CD8-positive, alpha-beta T cell (primary cell): ENCODE measurements at regions of chrX and their contacts with region 1.

Region 1: GRCh38 chrX:153971450-153972367 is at the start of gene HCFC1:
- DNase-seq: peak; percentile 78 to 96 (median 92)
- ATAC-seq: peak; percentile 45
- H3K4me3 ChIP-seq: peak within 1 kb of the TSS; percentile 94 to 97
- H3K4me3 Mint-ChIP-seq: peak within 1 kb of the TSS; percentile 100
- H3K27ac ChIP-seq: peak within 1 kb of the TSS; percentile 94 to 99
- H3K27ac Mint-ChIP-seq: peak within 1 kb of the TSS; percentile 100
- H3K4me1 ChIP-seq: peaks cover 36% of the 10 kb centered on the region
- H3K4me1 Mint-ChIP-seq: peaks cover 40% of the 10 kb centered on the region
- H3K27me3 ChIP-seq: no peaks in the 10 kb centered on the region
- H3K27me3 Mint-ChIP-seq: no peaks in the 10 kb centered on the region
- CTCF ChIP-seq: no peak
- total RNA-seq, gene HCFC1: 49.1 to 56.3 TPM

Region 2: DNA sequence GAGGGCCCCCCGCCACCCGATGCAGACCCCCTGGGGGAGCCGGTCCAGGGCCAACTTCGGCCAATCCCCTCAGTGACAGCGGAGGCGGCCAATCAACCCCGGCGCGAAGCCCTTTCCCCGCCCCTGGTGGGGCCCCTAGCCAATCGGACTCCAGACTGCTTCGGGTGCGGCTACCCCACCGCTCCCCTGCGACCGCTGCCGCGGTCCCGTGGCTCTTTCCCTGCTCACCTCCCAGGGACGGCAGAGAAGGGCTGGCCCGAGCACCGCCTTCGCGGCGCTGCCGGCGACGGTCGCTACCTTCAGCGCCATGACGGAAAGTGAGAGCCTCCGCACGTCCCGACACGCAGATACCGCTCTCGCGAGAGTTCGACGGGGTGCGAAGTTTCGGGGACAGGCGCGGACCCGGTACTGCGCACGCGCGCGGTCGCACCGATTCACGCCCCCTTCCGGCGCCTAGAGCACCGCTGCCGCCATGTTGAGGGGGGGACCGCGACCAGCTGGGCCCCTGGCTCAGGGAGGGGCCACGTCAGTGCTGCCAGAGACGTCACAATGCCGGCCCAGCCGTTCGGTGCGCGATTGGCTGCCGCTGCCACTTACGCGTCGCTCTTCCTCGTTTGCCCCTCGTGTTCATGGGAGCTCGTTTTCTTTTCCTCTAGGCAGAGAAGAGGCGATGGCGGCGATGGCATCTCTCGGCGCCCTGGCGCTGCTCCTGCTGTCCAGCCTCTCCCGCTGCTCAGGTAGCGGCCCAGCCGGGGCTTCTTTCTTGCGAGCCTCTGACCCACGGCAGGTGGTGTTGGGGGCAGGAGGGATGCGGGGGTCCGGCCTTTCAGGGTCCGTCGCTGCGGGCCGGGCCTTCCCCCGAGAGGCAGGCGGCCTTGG is 177.5 kb before region 1 on chrX and contains the starts of genes IDH3G and SSR4:
- CTCF ChIA-PET with region 1: no interaction called
- POLR2A ChIA-PET with region 1: interaction called, 4 read pairs
- intact Hi-C with region 1: loop called in 1 of 2 experiments (anchors 1 kb)
- DNase-seq: peak; percentile 84 to 96 (median 90)
- ATAC-seq: peak; percentile 92
- H3K4me3 ChIP-seq: peak within 1 kb of the TSS; percentile 83 to 86
- H3K4me3 Mint-ChIP-seq: peak within 1 kb of the TSS; percentile 90
- H3K27ac ChIP-seq: peak within 1 kb of the TSS; percentile 92 to 95
- H3K27ac Mint-ChIP-seq: peak within 1 kb of the TSS; percentile 95
- H3K4me1 ChIP-seq: peaks cover 34% of the 10 kb centered on the region
- H3K4me1 Mint-ChIP-seq: peaks cover 30% of the 10 kb centered on the region
- H3K27me3 ChIP-seq: no peaks in the 10 kb centered on the region
- H3K27me3 Mint-ChIP-seq: no peaks in the 10 kb centered on the region
- CTCF ChIP-seq: no peak
- total RNA-seq, gene IDH3G: 55.8 to 56.5 TPM
- total RNA-seq, gene SSR4: 175 TPM

Region 3: DNA sequence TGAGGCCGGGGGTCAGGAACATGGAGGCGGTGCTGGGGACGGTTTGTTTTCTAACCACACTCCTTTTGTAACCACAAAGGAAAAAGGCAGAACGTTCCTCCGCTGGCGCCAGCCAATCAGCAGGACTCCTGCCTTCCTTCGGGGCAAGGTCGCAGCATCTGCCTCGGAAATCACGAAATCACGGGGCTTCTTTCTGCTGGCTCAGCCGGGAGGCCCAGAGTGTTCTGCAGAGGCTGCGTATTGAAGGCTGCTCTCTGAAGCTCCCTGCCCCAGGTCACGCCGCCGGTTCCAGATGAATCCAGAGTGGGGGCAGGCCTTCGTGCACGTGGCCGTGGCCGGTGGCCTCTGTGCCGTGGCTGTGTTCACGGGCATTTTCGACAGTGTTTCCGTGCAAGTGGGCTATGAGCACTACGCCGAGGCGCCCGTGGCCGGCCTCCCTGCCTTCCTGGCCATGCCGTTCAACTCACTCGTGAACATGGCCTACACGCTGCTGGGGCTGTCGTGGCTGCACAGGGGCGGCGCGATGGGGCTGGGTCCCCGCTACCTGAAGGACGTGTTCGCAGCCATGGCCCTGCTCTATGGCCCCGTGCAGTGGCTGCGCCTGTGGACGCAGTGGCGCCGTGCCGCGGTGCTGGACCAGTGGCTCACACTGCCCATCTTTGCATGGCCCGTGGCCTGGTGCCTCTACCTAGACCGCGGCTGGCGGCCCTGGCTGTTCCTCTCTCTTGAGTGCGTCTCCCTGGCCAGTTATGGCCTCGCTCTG is 10.2 kb after region 1 on chrX:
- CTCF ChIA-PET with region 1: no interaction called
- POLR2A ChIA-PET with region 1: interaction called, 11 read pairs
- intact Hi-C with region 1: loop called in 1 of 2 experiments (anchors 1 kb)
- DNase-seq: peak in 7 of 9 experiments; percentile 46 to 78 (median 61)
- ATAC-seq: peak; percentile 29
- H3K4me3 ChIP-seq: peak overlapping the region; percentile 2 to 37
- H3K4me3 Mint-ChIP-seq: peak overlapping the region; percentile 50
- H3K27ac ChIP-seq: peak overlapping the region; percentile 33 to 83
- H3K27ac Mint-ChIP-seq: peak overlapping the region; percentile 84
- H3K4me1 ChIP-seq: peaks cover 55% of the 10 kb centered on the region
- H3K4me1 Mint-ChIP-seq: peaks cover 43% of the 10 kb centered on the region
- H3K27me3 ChIP-seq: no peaks in the 10 kb centered on the region
- H3K27me3 Mint-ChIP-seq: no peaks in the 10 kb centered on the region
- CTCF ChIP-seq: no peak

Region 4: DNA sequence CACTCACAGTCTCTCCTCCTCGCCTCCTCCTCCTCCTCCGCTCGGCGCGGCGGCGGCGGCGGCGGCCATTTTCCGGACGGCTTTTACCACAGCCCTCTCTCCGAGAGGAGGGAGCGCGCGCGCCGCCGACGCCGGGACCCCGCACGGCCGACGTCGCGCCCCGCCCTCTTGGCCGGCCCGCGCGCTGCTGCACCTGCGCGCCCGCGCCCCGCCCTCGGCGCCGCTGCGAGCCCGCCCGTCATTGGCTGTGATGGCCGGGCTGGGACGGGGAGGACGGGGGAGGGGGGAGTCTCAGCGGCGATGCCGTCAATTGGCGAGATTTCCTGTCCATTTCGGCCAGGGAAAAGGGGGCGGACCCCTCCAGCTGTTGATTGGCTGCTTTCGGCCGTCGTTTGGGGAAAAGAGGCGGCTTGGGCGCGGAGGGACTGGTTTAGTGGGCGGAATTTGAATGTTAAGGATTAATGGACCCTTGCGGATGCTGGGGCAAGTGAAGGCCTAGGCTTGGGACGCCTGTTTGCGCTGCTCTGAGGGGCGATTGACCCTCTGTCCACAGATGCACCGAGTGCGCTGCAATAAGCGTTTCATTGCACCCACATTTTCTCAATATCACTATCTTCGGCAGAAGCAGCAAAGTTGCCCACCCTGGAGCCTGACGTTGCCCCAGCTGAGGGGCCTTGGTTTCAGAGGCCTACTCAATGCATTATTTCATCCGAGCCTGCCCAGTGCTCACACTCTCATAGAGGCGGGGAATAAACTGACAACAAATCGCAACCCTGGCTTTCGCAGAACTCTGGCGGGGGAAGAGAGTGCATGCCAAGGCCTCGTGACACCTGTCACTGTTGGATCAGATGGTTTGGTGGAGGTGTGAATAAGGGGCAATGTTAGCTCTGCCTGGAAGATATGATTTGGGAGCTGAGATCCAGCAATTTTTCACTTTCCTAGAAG is 126.2 kb after region 1 on chrX and contains the start of gene MECP2:
- CTCF ChIA-PET with region 1: no interaction called
- POLR2A ChIA-PET with region 1: interaction called, 3 read pairs
- intact Hi-C with region 1: loop called in 1 of 2 experiments (anchors 5 kb)
- DNase-seq: peak; percentile 72 to 93 (median 83)
- ATAC-seq: peak; percentile 88
- H3K4me3 ChIP-seq: peak within 1 kb of the TSS; percentile 84 to 85
- H3K4me3 Mint-ChIP-seq: peak within 1 kb of the TSS; percentile 97
- H3K27ac ChIP-seq: peak within 1 kb of the TSS; percentile 88 to 90
- H3K27ac Mint-ChIP-seq: peak within 1 kb of the TSS; percentile 99
- H3K4me1 ChIP-seq: peaks cover 34% of the 10 kb centered on the region
- H3K4me1 Mint-ChIP-seq: peaks cover 34% of the 10 kb centered on the region
- H3K27me3 ChIP-seq: no peaks in the 10 kb centered on the region
- H3K27me3 Mint-ChIP-seq: no peaks in the 10 kb centered on the region
- CTCF ChIP-seq: no peak
- total RNA-seq, gene MECP2: 106 to 204 TPM

Region 5: GRCh38 chrX:154298312-154298711 is 326.6 kb after region 1 on chrX:
- CTCF ChIA-PET with region 1: no interaction called
- POLR2A ChIA-PET with region 1: no interaction called
- intact Hi-C with region 1: no loop called
- DNase-seq: no peak
- ATAC-seq: no peak
- H3K4me3 ChIP-seq: no peak overlapping the region
- H3K4me3 Mint-ChIP-seq: no peak overlapping the region
- H3K27ac ChIP-seq: no peak overlapping the region
- H3K27ac Mint-ChIP-seq: no peak overlapping the region
- H3K4me1 ChIP-seq: no peaks in the 10 kb centered on the region
- H3K4me1 Mint-ChIP-seq: no peaks in the 10 kb centered on the region
- H3K27me3 ChIP-seq: no peaks in the 10 kb centered on the region
- H3K27me3 Mint-ChIP-seq: no peaks in the 10 kb centered on the region
- CTCF ChIP-seq: no peak

Region 6: DNA sequence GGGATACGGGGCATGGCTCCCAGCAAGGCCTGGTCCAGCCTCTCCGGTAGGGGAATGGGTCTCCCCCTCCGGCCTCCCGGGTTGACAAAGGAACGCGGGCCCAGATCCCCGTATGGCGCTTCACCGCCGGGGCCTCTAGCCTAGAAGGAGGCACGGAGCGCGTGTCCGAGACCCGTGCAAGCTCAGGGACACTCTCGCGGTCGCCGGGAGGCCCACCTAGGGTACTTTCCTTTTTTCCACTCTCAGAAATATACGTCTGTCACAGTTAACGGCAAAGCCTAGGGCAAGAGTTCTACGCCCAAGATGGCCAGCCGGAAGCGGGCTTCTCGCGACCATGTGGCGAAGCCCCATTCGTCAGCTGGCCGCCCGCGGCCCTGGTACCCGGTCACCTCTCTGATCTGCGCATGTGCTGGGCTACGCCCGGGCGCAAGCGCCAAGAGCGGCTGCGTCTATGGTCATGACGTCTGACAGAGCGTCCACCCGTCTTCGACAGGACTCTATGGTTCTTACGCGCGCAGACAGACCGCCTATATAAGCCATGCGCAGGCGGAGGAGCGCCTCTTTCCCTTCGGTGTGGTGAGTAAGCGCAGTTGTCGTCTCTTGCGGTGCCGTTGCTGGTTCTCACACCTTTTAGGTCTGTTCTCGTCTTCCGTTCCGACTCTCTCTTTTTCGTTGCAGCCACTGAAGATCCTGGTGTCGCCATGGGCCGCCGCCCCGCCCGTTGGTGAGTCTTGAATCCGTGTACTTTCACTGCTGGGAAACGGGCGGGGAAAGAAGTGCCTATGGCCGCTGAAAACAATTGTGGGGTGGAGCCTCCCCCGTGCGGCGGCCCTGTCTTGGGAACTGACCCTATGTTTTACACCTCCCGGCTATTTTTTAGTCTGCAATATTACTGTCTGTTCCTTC is 426.4 kb after region 1 on chrX and contains the start of gene RPL10:
- CTCF ChIA-PET with region 1: no interaction called
- POLR2A ChIA-PET with region 1: interaction called, 11 read pairs
- intact Hi-C with region 1: no loop called
- DNase-seq: peak; percentile 78 to 96 (median 87)
- ATAC-seq: peak; percentile 82
- H3K4me3 ChIP-seq: peak within 1 kb of the TSS; percentile 86 to 95
- H3K4me3 Mint-ChIP-seq: peak within 1 kb of the TSS; percentile 96
- H3K27ac ChIP-seq: peak within 1 kb of the TSS; percentile 99
- H3K27ac Mint-ChIP-seq: peak within 1 kb of the TSS; percentile 99
- H3K4me1 ChIP-seq: peaks cover 15% of the 10 kb centered on the region
- H3K4me1 Mint-ChIP-seq: peaks cover 25% of the 10 kb centered on the region
- H3K27me3 ChIP-seq: no peaks in the 10 kb centered on the region
- H3K27me3 Mint-ChIP-seq: no peaks in the 10 kb centered on the region
- CTCF ChIP-seq: no peak
- total RNA-seq, gene RPL10: 6,105 to 6,263 TPM

Region 7: GRCh38 chrX:154547245-154548027 is 575.7 kb after region 1 on chrX and contains the start of gene IKBKG:
- CTCF ChIA-PET with region 1: no interaction called
- POLR2A ChIA-PET with region 1: interaction called, 3 read pairs
- intact Hi-C with region 1: loop called in 1 of 2 experiments (anchors 1 kb)
- DNase-seq: peak; percentile 76 to 93 (median 86)
- ATAC-seq: peak; percentile 77
- H3K4me3 ChIP-seq: peak within 1 kb of the TSS; percentile 78 to 89
- H3K4me3 Mint-ChIP-seq: peak within 1 kb of the TSS; percentile 93
- H3K27ac ChIP-seq: peak within 1 kb of the TSS; percentile 81 to 95
- H3K27ac Mint-ChIP-seq: peak within 1 kb of the TSS; percentile 93
- H3K4me1 ChIP-seq: peaks cover 49% of the 10 kb centered on the region
- H3K4me1 Mint-ChIP-seq: peaks cover 49% of the 10 kb centered on the region
- H3K27me3 ChIP-seq: no peaks in the 10 kb centered on the region
- H3K27me3 Mint-ChIP-seq: no peaks in the 10 kb centered on the region
- CTCF ChIP-seq: no peak
- total RNA-seq, gene IKBKG: 34.7 to 37.4 TPM